H1 (cell line): ENCODE measurements at regions of chr9 and their contacts with region 1.

Region 1: GRCh38 chr9:114271641-114272081 is 51.2 kb upstream of the ORM1 start:
- DNase-seq: peak in 1 of 2 experiments; percentile 80
- H3K4me3 ChIP-seq: no peak overlapping the region
- H3K27ac ChIP-seq: no peak overlapping the region
- H3K4me1 ChIP-seq: no peaks in the 10 kb centered on the region
- H3K27me3 ChIP-seq: no peaks in the 10 kb centered on the region
- CTCF ChIP-seq: peak; percentile 66 to 69 (median 66)
- EP300 ChIP-seq: no peak
- POLR2A ChIP-seq: no peak
- RAD21 ChIP-seq: peak; percentile 70 to 77

Region 2: DNA sequence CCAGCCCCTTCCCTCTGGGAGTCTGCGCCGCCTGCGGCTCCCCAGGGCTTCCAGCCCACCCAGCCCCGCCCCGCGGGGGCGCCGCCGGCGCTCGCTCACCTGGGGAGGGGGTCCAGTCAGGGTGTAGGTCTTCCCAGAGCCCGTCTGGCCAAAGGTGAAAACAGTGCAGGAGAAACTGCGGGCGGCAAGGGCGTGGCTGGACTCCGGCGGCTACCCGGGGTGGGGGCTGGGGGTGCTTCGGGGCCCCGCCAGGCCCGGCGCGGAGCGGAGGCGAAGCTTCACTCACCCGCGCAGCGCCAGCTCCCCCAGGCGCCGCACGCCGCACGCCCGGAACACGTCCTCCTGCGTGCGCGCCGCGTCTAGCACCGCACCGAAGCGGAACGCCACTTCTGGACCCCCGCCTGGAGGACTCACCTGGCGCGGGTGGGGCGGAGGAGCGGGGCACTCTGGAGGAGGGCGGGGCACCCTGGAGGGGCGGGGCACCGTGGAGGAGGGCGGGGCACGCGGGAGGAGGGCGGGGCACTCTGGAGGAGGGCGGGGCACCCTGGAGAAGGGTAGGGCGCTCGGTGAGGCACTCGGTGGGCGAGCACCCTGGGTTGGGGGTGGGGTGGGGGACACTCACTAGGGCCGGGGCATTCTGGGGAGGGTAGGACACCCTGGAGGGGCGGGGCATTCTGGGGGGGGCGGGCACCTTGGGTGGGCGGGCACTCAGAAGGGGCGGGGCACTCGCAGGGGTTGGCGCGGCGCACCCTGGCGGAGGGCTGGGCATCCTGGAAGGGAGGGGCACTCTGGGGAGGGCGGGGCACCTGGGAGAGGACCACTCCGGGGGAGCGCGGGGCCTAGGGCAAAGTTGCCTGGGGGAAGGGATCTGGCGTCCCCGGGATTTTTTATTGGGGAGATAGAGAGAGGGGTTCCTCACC is 173.4 kb before region 1 on chr9:
- CTCF ChIA-PET with region 1: interaction called, 12 read pairs
- POLR2A ChIA-PET with region 1: no interaction called
- DNase-seq: peak in 1 of 2 experiments; percentile 88
- H3K4me3 ChIP-seq: peak overlapping the region; percentile 58 to 84 (median 62)
- H3K27ac ChIP-seq: no peak overlapping the region
- H3K4me1 ChIP-seq: peaks cover 0 to 16% (median 10%) of the 10 kb centered on the region in 4 experiments; a peak in 6 of 7 replicates
- H3K27me3 ChIP-seq: peaks cover 2 to 27% (median 19%) of the 10 kb centered on the region in 4 experiments
- CTCF ChIP-seq: peak in 1 of 3 experiments; percentile 33; a peak in 1 of 4 replicates
- EP300 ChIP-seq: no peak
- POLR2A ChIP-seq: no peak
- RAD21 ChIP-seq: no peak

Region 3: GRCh38 chr9:114207034-114207810 is 64.4 kb before region 1 on chr9:
- CTCF ChIA-PET with region 1: interaction called, 10 read pairs
- POLR2A ChIA-PET with region 1: no interaction called
- DNase-seq: no peak
- H3K4me3 ChIP-seq: no peak overlapping the region
- H3K27ac ChIP-seq: no peak overlapping the region
- H3K4me1 ChIP-seq: peaks cover 0 to 24% (median 6%) of the 10 kb centered on the region in 4 experiments; a peak in 6 of 7 replicates
- H3K27me3 ChIP-seq: no peaks in the 10 kb centered on the region
- CTCF ChIP-seq: no peak
- EP300 ChIP-seq: no peak
- POLR2A ChIP-seq: no peak
- RAD21 ChIP-seq: no peak

Region 4: DNA sequence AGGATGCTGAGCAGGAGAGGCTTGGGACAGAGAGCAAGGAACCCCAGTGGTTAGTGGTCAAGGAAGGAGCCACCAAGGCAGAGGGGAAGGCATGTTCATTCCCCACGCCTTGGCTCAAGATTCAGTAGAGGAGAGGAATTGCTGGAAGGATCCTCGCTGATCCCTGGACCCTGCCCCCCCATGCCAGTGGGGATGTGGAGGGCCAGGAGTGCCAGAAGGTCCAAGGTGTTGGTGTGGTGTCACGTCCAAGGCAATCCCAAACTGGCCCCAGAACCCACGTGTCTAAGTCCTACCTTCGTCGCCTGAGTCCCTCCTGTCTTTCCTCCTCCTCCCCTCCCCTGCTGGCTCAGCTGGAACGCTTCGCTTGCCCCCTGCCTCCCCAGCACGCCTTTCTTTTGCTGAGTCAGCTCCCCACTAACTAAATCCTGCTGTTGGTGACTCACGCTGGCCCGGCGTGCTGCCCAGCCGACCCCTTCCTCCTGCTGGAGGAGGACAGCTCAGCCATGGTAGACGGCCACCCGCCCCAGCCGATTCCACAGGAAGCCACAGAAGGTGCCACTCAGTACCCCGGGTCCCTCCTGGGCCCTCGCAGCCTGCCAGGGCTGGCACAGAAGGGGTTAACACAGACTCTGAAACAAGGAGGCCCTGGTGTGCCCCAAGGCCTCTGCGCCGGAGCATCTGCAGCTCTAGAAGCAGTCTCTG is 13.7 kb after region 1 on chr9:
- CTCF ChIA-PET with region 1: interaction called, 21 read pairs
- POLR2A ChIA-PET with region 1: no interaction called
- DNase-seq: no peak
- H3K4me3 ChIP-seq: no peak overlapping the region
- H3K27ac ChIP-seq: no peak overlapping the region
- H3K4me1 ChIP-seq: peaks cover 0 to 20% (median 4%) of the 10 kb centered on the region in 4 experiments; a peak in 5 of 7 replicates
- H3K27me3 ChIP-seq: no peaks in the 10 kb centered on the region
- CTCF ChIP-seq: no peak
- EP300 ChIP-seq: no peak
- POLR2A ChIP-seq: no peak
- RAD21 ChIP-seq: no peak

Region 5: GRCh38 chr9:114316605-114317230 is 45.1 kb after region 1 on chr9:
- CTCF ChIA-PET with region 1: no interaction called
- POLR2A ChIA-PET with region 1: no interaction called
- DNase-seq: peak in 1 of 2 experiments; percentile 37
- H3K4me3 ChIP-seq: no peak overlapping the region
- H3K27ac ChIP-seq: no peak overlapping the region
- H3K4me1 ChIP-seq: no peaks in the 10 kb centered on the region
- H3K27me3 ChIP-seq: no peaks in the 10 kb centered on the region
- CTCF ChIP-seq: no peak
- EP300 ChIP-seq: no peak
- POLR2A ChIP-seq: no peak
- RAD21 ChIP-seq: no peak

Region 6: DNA sequence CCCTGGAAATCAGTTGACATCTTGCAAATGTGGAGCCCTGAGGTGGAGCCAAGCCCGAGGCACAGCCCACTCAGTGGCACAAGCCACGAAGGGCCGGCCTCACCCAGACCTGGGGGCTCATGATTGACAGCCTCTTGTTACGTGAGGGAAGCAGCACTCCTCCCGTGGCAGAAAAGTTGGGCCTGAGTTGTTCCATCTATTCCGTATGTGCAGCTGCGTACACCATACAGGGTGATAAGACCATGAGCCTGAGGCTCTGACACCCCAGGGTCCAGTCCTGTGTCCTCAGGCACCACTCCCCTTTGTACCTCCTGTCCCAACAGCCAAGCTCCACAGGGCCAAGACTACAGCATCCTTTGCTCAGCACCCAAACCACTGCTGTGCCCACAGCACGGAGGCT is 56.1 kb after region 1 on chr9:
- CTCF ChIA-PET with region 1: no interaction called
- POLR2A ChIA-PET with region 1: no interaction called
- DNase-seq: no peak
- H3K4me3 ChIP-seq: no peak overlapping the region
- H3K27ac ChIP-seq: no peak overlapping the region
- H3K4me1 ChIP-seq: 0 out of 7 replicates have a peak, but pooled peaks cover 0 to 2% (median 0%) of the 10 kb centered on the region in 4 experiments
- H3K27me3 ChIP-seq: no peaks in the 10 kb centered on the region
- CTCF ChIP-seq: no peak
- EP300 ChIP-seq: no peak
- POLR2A ChIP-seq: no peak
- RAD21 ChIP-seq: no peak

Region 7: GRCh38 chr9:114364134-114365041 is 92.7 kb after region 1 on chr9:
- CTCF ChIA-PET with region 1: no interaction called
- POLR2A ChIA-PET with region 1: no interaction called
- DNase-seq: no peak
- H3K4me3 ChIP-seq: no peak overlapping the region
- H3K27ac ChIP-seq: no peak overlapping the region
- H3K4me1 ChIP-seq: peaks cover 0 to 6% (median 2%) of the 10 kb centered on the region in 4 experiments; a peak in 4 of 7 replicates
- H3K27me3 ChIP-seq: no peaks in the 10 kb centered on the region
- CTCF ChIP-seq: no peak
- EP300 ChIP-seq: no peak
- POLR2A ChIP-seq: no peak
- RAD21 ChIP-seq: no peak